Activated CD8-positive, alpha-beta memory T cell treated with anti-CD3 and anti-CD28 coated beads, Interleukin-2, amount 10 ng/mL, durations not matched to agents 7 days and 5 days (primary cell): ENCODE measurements at regions of chr16 and their contacts with region 1.

Region 1: GRCh38 chr16:50210266-50211038 is 55.9 kb upstream of the ADCY7 start:
- DNase-seq: peak; percentile 80
- ATAC-seq: peak; percentile 90
- H3K4me3 Mint-ChIP-seq: no peak overlapping the region
- H3K27ac Mint-ChIP-seq: peak overlapping the region; percentile 31
- H3K4me1 Mint-ChIP-seq: peaks cover 34% of the 10 kb centered on the region
- H3K27me3 Mint-ChIP-seq: no peaks in the 10 kb centered on the region

Region 2: GRCh38 chr16:50065624-50066481 is 144.6 kb before region 1 on chr16 and contains the start of gene HEATR3:
- CTCF ChIA-PET with region 1: interaction called, 153 read pairs
- DNase-seq: peak; percentile 96
- ATAC-seq: peak; percentile 91
- H3K4me3 Mint-ChIP-seq: peak within 1 kb of the TSS; percentile 97
- H3K27ac Mint-ChIP-seq: peak within 1 kb of the TSS; percentile 91
- H3K4me1 Mint-ChIP-seq: peaks cover 40% of the 10 kb centered on the region
- H3K27me3 Mint-ChIP-seq: no peaks in the 10 kb centered on the region
- total RNA-seq, gene HEATR3: 24.3 to 26.1 TPM

Region 3: DNA sequence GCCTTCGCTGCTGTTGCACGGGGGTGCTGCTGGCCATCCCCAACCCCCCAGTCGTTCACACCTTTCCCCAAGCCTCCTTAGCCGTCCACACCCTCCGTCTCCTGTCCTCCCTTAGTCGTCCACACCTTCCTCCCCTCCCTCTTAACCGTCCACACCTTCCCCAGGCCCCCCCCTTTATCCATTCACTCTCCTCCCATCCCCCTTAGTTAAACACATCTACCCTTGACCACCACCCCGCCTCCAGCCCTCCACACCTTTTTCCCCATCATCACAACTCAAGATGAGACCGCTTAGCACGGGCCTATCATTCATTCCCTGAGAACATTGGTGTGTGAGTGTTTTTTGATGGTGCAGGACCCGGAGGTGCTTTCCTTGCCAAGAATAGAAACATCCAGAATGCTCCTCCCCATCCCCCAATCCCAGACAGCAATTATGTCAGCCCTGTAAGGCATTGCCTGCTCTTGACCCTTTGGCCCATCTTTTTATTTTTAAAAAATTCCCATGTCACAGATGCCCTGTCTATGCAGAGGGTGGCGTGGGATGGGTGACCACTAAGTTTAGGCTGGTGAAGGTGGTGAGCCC is 56.0 kb before region 1 on chr16:
- CTCF ChIA-PET with region 1: interaction called, 14 read pairs
- DNase-seq: peak; percentile 44
- ATAC-seq: no peak
- H3K4me3 Mint-ChIP-seq: peak overlapping the region; percentile 80
- H3K27ac Mint-ChIP-seq: peak overlapping the region; percentile 69
- H3K4me1 Mint-ChIP-seq: peaks cover 43% of the 10 kb centered on the region
- H3K27me3 Mint-ChIP-seq: no peaks in the 10 kb centered on the region

Region 4: GRCh38 chr16:50166511-50167500 is 43.6 kb before region 1 on chr16:
- CTCF ChIA-PET with region 1: interaction called, 17 read pairs
- DNase-seq: no peak
- ATAC-seq: peak; percentile 63
- H3K4me3 Mint-ChIP-seq: peak overlapping the region; percentile 21
- H3K27ac Mint-ChIP-seq: peak overlapping the region; percentile 52
- H3K4me1 Mint-ChIP-seq: peaks cover 36% of the 10 kb centered on the region
- H3K27me3 Mint-ChIP-seq: no peaks in the 10 kb centered on the region

Region 5: GRCh38 chr16:50266337-50267091 is 56.1 kb after region 1 on chr16 and contains the start of gene ADCY7:
- CTCF ChIA-PET with region 1: interaction called, 11 read pairs
- DNase-seq: peak; percentile 93
- ATAC-seq: peak; percentile 85
- H3K4me3 Mint-ChIP-seq: peak within 1 kb of the TSS; percentile 97
- H3K27ac Mint-ChIP-seq: peak within 1 kb of the TSS; percentile 99
- H3K4me1 Mint-ChIP-seq: peaks cover 80% of the 10 kb centered on the region
- H3K27me3 Mint-ChIP-seq: no peaks in the 10 kb centered on the region
- total RNA-seq, gene ADCY7: 131 to 232 TPM

Region 6: DNA sequence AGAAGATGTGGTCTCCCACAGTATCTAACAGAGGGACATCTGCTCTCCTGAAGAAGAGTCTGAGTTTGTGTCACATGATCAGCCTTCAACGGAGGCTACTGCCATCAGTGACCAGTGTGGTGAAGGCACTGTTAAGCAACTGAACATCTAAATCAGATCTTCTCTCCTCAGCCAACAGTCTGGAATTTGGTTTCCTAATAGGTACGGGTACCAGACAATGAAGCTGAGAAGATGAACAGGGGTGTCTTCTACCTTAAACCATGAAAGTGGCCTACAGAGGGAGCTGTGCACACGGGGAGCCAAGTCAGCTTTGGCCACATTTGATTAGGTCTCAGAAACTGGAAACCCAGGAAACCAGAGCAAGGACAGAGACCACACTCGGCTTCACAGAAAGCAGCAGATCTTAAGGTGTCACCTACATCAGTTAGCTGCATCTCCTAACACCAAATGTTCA is 116.5 kb after region 1 on chr16:
- CTCF ChIA-PET with region 1: interaction called, 23 read pairs
- DNase-seq: peak; percentile 88
- ATAC-seq: peak; percentile 97
- H3K4me3 Mint-ChIP-seq: no peak overlapping the region
- H3K27ac Mint-ChIP-seq: peak overlapping the region; percentile 69
- H3K4me1 Mint-ChIP-seq: peaks cover 50% of the 10 kb centered on the region
- H3K27me3 Mint-ChIP-seq: no peaks in the 10 kb centered on the region